ENCODE measurements at regions of chr12 and their contacts with region 1.

Region 1: DNA sequence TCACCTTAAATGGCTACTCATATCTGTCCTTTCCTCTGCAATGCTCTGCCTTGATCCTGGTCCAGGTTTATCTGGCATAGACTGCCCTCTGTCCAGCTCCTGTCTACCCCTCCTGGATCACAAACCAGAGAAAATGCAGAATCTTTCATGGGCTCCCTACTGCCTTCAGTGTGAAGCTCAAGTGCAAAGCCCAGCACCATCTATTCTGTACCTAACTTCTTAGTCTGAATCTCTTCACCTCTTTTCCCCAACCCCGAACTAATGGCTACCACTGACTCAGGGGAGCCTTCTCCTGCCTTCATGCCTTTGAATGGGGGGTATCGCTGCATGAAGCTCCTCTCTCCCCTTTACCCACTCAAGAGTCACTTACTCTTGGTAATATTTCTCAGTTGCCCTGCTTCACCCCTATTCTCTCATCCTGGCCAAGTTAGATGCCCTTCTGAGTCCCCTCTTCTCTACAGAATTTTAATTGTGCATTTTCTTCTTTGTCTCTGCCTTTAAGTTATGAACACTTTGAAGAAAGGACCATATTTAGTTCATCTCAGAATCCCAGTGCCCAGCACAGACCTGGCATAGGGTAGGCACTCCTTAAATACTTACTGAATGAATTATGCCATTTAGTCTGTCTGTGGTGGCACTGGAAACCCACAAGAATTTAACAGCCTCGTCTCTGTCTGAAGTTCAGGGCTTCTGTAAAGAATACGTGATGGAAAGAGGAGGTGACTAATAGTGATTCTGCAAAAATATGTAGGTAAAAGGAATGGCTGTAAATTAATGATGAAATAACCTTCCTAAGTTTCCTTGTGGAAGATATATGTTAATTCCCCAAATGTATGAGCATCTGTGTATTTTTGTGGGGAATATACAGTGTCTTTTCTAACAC is 191.3 kb upstream of the AMIGO2 start:
- DNase-seq: no peak
- ATAC-seq: no peak
- H3K4me3 ChIP-seq: no peak overlapping the region
- H3K4me3 Mint-ChIP-seq: peak overlapping the region; percentile 15
- H3K27ac ChIP-seq: no peak overlapping the region
- H3K27ac Mint-ChIP-seq: peak overlapping the region; percentile 70
- H3K4me1 ChIP-seq: peaks cover 62 to 67% of the 10 kb centered on the region in 2 donors
- H3K4me1 Mint-ChIP-seq: peaks cover 85% of the 10 kb centered on the region
- H3K27me3 ChIP-seq: no peaks in the 10 kb centered on the region
- H3K27me3 Mint-ChIP-seq: no peaks in the 10 kb centered on the region
- CTCF ChIP-seq: no peak

Region 2: GRCh38 chr12:47312808-47313426 is 41.9 kb after region 1 on chr12:
- CTCF ChIA-PET with region 1: interaction called, 8 read pairs
- POLR2A ChIA-PET with region 1: interaction called, 4 read pairs
- intact Hi-C with region 1: loop called (anchors 2 kb)
- DNase-seq: peak; percentile 78
- ATAC-seq: peak; percentile 79
- H3K4me3 ChIP-seq: peak overlapping the region in 1 of 5 experiments; percentile 0
- H3K4me3 Mint-ChIP-seq: peak overlapping the region; percentile 17
- H3K27ac ChIP-seq: peak overlapping the region; percentile 40 to 61
- H3K27ac Mint-ChIP-seq: peak overlapping the region; percentile 68
- H3K4me1 ChIP-seq: peaks cover 51 to 65% of the 10 kb centered on the region in 2 donors
- H3K4me1 Mint-ChIP-seq: peaks cover 63% of the 10 kb centered on the region
- H3K27me3 ChIP-seq: no peaks in the 10 kb centered on the region
- H3K27me3 Mint-ChIP-seq: no peaks in the 10 kb centered on the region
- CTCF ChIP-seq: no peak

Region 3: GRCh38 chr12:47361389-47362021 is 90.5 kb after region 1 on chr12:
- CTCF ChIA-PET with region 1: no interaction called
- POLR2A ChIA-PET with region 1: interaction called, 3 read pairs
- intact Hi-C with region 1: loop called (anchors 1 kb)
- DNase-seq: peak; percentile 76
- ATAC-seq: peak; percentile 51
- H3K4me3 ChIP-seq: peak overlapping the region; percentile 24 to 52 (median 47)
- H3K4me3 Mint-ChIP-seq: peak overlapping the region; percentile 87
- H3K27ac ChIP-seq: peak overlapping the region; percentile 93 to 96
- H3K27ac Mint-ChIP-seq: peak overlapping the region; percentile 98
- H3K4me1 ChIP-seq: peaks cover 71% of the 10 kb centered on the region in 2 donors
- H3K4me1 Mint-ChIP-seq: peaks cover 62% of the 10 kb centered on the region
- H3K27me3 ChIP-seq: no peaks in the 10 kb centered on the region
- H3K27me3 Mint-ChIP-seq: no peaks in the 10 kb centered on the region
- CTCF ChIP-seq: no peak

Measured in B cell (primary cell).